ENCODE measurements at regions of chr11 and their contacts with region 1.

Region 1: GRCh38 chr11:62591448-62592145 is at the start of gene TUT1:
- DNase-seq: peak; percentile 99
- H3K4me3 Mint-ChIP-seq: peak within 1 kb of the TSS; percentile 96
- H3K27ac Mint-ChIP-seq: peak within 1 kb of the TSS; percentile 95
- H3K4me1 Mint-ChIP-seq: peaks cover 12% of the 10 kb centered on the region
- H3K27me3 Mint-ChIP-seq: no peaks in the 10 kb centered on the region
- CTCF ChIP-seq: no peak
- total RNA-seq, gene TUT1: 26.0 and 28.3 TPM in 2 replicates

Region 2: DNA sequence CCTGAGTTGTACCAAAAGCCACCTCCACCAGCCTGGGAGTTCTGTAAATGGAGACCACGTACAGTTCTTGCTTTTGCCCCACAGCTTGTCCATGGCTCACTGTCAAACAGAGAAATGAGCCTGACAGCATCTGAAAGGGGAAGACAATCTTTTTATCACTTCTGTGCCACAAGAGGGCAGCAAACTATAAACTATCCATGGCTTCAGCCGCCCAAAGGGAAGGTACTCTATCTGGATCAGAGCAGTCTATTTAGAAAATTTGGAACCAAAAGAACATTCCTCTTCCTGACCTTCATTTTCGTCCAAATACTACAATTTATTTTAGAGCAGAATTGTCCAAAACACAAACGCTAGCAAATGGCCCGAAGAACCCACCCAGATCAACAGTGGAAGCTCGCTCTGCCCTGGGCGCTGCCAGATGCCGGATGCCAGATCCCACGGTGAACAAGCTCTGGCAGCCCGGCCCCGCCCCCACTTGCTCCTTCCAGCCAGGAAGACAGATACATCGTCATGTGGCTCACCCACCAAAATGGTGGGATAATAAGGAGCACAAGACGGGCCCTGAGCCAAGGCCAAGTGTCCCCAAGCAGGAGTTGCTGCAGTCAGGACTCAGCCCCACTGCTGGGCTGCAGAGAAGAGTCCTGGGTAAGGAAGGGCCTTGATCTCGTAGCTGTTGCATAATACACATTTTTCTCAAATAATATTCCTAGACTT is 196.6 kb before region 1 on chr11:
- CTCF ChIA-PET with region 1: interaction called, 19 read pairs
- POLR2A ChIA-PET with region 1: interaction called, 11 read pairs
- intact Hi-C with region 1: no loop called
- DNase-seq: peak; percentile 88
- H3K4me3 Mint-ChIP-seq: peak overlapping the region; percentile 73
- H3K27ac Mint-ChIP-seq: peak overlapping the region; percentile 29
- H3K4me1 Mint-ChIP-seq: peaks cover 11% of the 10 kb centered on the region
- H3K27me3 Mint-ChIP-seq: no peaks in the 10 kb centered on the region
- CTCF ChIP-seq: peak; percentile 76

Region 3: DNA sequence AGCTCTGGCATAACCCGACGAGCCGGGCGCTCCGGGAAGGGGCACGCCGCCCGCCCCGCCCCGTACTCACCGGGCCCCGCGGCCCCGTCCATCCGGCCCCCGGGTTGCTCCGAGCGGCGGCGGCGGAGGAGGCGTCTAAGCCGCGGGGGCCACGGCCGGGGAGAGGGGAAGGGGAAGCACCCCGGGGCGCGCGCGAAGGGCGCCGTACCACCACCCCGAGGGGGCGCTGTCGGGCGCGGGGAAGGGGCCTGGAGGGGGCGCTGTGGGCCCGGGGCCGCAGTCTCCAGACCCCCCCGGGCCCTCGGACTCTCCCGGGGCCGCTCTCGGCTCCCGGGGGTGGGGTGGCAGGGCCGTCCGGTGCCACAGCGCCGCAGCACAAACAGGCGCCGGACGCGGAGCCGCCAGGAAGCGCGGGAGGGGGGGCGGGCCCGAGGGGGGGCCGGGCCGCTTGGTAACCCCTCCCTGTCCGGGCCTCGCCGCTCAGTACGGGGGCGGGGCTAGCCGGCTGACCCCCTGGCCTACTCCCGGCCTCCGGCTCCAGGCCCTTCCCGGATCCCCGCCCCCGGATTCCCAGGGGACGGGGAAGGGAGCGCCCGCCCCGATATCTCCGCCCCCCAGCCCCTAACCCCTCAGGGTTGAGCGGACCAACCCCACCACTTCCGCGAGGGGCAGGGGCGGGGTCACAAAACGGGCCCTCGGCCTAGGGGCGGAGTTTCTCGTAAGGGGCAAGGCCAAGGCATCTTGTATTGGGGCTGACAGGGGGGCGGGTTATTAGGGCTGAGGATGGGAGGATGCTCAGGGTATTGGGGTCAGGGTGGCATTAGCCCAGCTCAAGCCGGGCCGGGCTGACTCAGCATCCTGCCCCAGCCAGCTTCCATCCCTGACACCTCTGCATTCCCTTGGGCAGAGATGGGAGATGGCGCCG is 21.0 kb after region 1 on chr11 and contains the starts of genes EML3 and ROM1:
- CTCF ChIA-PET with region 1: interaction called, 39 read pairs
- POLR2A ChIA-PET with region 1: interaction called, 149 read pairs
- intact Hi-C with region 1: loop called (anchors 2 kb)
- DNase-seq: peak; percentile 89
- H3K4me3 Mint-ChIP-seq: peak within 1 kb of the TSS; percentile 90
- H3K27ac Mint-ChIP-seq: peak within 1 kb of the TSS; percentile 80
- H3K4me1 Mint-ChIP-seq: peaks cover 15% of the 10 kb centered on the region
- H3K27me3 Mint-ChIP-seq: no peaks in the 10 kb centered on the region
- CTCF ChIP-seq: peak; percentile 100
- total RNA-seq, gene EML3: 33.9 and 43.7 TPM in 2 replicates
- total RNA-seq, gene ROM1: 2.5 and 2.9 TPM in 2 replicates

Region 4: GRCh38 chr11:62645956-62646824 is 54.6 kb after region 1 on chr11 and contains the start of gene GANAB:
- CTCF ChIA-PET with region 1: interaction called, 6 read pairs
- POLR2A ChIA-PET with region 1: interaction called, 33 read pairs
- intact Hi-C with region 1: no loop called
- DNase-seq: peak; percentile 99
- H3K4me3 Mint-ChIP-seq: peak within 1 kb of the TSS; percentile 95
- H3K27ac Mint-ChIP-seq: peak within 1 kb of the TSS; percentile 92
- H3K4me1 Mint-ChIP-seq: no peaks in the 10 kb centered on the region
- H3K27me3 Mint-ChIP-seq: no peaks in the 10 kb centered on the region
- CTCF ChIP-seq: no peak
- total RNA-seq, gene GANAB: 364 and 374 TPM in 2 replicates

Region 5: GRCh38 chr11:62678770-62679696 is 87.4 kb after region 1 on chr11 and contains the start of gene UBXN1:
- CTCF ChIA-PET with region 1: interaction called, 5 read pairs
- POLR2A ChIA-PET with region 1: interaction called, 58 read pairs
- intact Hi-C with region 1: loop called (anchors 5 kb)
- DNase-seq: peak; percentile 89
- H3K4me3 Mint-ChIP-seq: peak within 1 kb of the TSS; percentile 72
- H3K27ac Mint-ChIP-seq: peak within 1 kb of the TSS; percentile 94
- H3K4me1 Mint-ChIP-seq: peaks cover 22% of the 10 kb centered on the region
- H3K27me3 Mint-ChIP-seq: no peaks in the 10 kb centered on the region
- CTCF ChIP-seq: no peak
- total RNA-seq, gene UBXN1: 146 and 153 TPM in 2 replicates

Region 6: DNA sequence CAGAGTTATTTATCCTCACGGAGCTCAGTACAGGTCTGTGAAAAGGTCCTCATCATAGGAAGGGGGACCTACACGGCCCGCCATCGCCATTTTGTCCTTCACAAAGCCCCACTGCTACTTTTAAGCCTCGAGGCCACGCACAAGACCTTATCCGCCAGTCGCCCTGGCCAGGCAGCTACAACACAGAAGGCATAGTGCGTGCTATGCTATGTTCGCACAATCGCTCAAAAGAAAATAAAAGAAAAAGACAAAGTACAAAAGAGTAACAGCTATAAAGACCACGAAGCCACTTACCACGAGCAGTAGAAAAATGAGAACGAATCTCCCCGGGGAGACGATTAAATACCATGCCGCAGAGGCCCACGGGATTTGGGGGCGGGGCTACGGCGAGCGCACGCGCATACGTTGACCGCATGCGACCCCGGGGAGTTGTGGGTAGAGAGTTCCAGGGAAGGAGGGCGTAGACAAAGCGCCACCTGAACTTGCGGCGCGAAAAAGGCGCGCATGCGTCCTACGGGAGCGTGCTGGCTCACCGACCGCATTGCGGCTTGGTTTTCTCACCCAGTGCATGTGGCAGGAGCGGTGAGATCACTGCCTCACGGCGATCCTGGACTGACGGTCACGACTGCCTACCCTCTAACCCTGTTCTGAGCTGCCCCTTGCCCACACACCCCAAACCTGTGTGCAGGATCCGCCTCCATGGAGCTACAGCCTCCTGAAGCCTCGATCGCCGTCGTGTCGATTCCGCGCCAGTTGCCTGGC is 264.2 kb after region 1 on chr11:
- CTCF ChIA-PET with region 1: no interaction called
- POLR2A ChIA-PET with region 1: interaction called, 28 read pairs
- intact Hi-C with region 1: no loop called
- DNase-seq: peak; percentile 98
- H3K4me3 Mint-ChIP-seq: peak overlapping the region; percentile 94
- H3K27ac Mint-ChIP-seq: peak overlapping the region; percentile 64
- H3K4me1 Mint-ChIP-seq: peaks cover 35% of the 10 kb centered on the region
- H3K27me3 Mint-ChIP-seq: no peaks in the 10 kb centered on the region
- CTCF ChIP-seq: no peak

Measured in MCF 10A (cell line).